AG04449 (cell line): ENCODE measurements at regions of chr2 and their contacts with region 1.

Region 1: GRCh38 chr2:37711308-37711731 is 39.9 kb upstream of the CDC42EP3 start:
- DNase-seq: peak; percentile 86
- H3K4me3 ChIP-seq: no peak overlapping the region
- CTCF ChIP-seq: no peak

Region 2: GRCh38 chr2:37740164-37740739 is 28.9 kb after region 1 on chr2:
- CTCF ChIA-PET with region 1: no interaction called
- POLR2A ChIA-PET with region 1: interaction called, 16 read pairs
- DNase-seq: no peak
- H3K4me3 ChIP-seq: no peak overlapping the region
- CTCF ChIP-seq: no peak

Region 3: GRCh38 chr2:37767956-37768925 is 56.9 kb after region 1 on chr2:
- CTCF ChIA-PET with region 1: no interaction called
- POLR2A ChIA-PET with region 1: interaction called, 19 read pairs
- DNase-seq: peak; percentile 91
- H3K4me3 ChIP-seq: no peak overlapping the region
- CTCF ChIP-seq: no peak